AG04449 (cell line): ENCODE measurements at regions of chr6 and their contacts with region 1.

Region 1: DNA sequence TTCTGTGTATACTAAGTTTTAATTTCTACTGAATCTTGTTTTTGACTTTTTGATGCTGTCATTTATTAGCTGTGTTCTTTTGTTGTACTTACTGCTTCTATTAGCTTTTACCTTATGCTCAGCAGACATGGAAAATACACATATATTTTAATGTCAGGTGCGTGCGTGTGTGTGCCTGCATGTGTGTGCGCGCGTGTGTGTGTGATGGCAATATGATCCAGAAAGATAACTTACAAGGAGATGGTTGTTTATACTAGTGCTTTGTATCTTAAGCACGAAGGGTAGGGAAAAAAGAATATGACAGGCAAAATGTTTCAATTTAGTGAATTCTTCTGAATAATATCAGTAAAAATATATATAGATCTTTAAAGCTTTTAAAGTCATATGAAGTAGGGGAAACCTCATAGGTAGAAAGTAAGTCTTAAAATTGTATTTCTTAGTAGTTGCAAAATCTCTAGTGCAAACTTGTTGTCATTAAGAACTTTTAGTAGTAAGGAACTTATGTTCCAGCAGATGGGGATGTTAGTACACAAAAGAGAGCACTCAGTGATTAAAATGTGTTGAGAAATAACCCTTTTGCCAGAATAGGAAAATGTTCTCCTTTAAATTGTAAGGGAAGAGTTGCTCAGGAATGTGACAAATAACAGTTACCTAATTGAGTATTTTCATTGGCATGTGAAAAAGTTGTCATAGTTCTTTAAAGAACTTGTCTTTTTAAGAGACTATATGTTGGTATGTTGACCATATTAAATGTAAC is 13.2 kb downstream of the QKI start:
- DNase-seq: peak; percentile 62
- H3K4me3 ChIP-seq: no peak overlapping the region
- CTCF ChIP-seq: peak; percentile 5

Region 2: DNA sequence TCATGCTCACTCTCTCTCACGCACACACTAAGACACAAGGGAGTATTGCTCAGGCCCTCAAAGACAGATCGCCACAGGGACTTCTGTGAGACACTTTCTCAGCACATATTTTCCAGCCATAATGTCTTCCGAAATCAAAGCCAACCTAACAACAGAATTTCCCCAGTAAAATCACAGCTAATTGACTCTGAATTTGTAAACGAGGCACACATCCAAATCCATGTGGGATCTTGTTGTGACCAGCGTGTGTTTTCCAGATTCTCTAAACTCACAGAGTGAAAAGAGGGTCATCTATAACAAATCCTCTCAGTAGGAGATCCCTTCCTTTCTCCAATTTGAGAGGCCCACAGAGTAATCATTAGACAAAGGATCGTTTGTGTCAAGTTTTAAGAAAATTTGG is 419.5 kb before region 1 on chr6:
- CTCF ChIA-PET with region 1: no interaction called
- POLR2A ChIA-PET with region 1: no interaction called
- DNase-seq: no peak
- H3K4me3 ChIP-seq: no peak overlapping the region
- CTCF ChIP-seq: no peak

Region 3: GRCh38 chr6:163438940-163439335 is 11.3 kb after region 1 on chr6:
- CTCF ChIA-PET with region 1: interaction called, 12 read pairs
- POLR2A ChIA-PET with region 1: no interaction called
- DNase-seq: no peak
- H3K4me3 ChIP-seq: no peak overlapping the region
- CTCF ChIP-seq: no peak

Region 4: DNA sequence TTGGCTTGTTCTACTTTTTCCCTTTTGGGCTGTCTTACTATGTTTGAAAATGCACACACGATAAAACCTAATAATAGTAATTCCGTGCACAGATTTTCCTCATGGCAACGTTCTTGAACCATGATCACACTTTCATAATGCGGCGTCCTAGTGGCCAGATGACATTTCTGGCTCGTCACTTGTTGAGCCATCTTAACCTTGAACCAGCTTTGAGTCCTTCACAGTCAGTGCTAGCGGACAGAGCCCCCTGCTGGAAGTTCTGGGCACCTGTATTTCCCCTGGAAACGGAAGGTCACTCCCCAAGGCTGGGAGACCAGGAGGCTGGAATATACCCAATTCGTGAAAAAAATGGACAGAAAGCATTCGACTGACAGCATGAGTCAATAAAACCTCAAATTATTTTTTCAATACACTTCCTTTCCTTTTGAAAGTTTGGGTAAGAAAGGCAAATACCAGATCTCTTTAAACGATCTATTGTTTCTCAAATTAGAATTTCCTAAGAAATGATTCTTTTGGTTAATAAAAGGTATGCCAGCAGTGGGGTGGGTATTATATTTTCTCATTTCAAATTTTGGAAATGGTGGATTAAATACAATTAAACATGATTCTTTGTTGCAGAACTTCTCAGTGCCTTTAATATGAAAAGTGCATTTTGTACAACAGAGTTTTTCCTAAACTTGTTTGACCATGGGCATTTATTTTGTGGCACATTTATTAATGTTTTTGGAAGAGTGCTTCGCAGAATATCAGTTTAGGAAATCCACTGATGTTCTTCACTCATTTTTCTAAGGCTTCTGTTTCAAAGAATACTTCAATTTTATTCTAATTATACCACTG is 529.1 kb after region 1 on chr6:
- CTCF ChIA-PET with region 1: interaction called, 23 read pairs
- POLR2A ChIA-PET with region 1: no interaction called
- DNase-seq: no peak
- H3K4me3 ChIP-seq: no peak overlapping the region
- CTCF ChIP-seq: peak; percentile 76